ENCODE measurements at regions of chr6 and their contacts with region 1.

Region 1: GRCh38 chr6:26285143-26286134 is 79.6 kb upstream of the BTN3A2 start:
- DNase-seq: peak; percentile 72 to 97 (median 92)
- ATAC-seq: peak; percentile 91
- H3K4me3 ChIP-seq: peak overlapping the region; percentile 88
- H3K4me3 Mint-ChIP-seq: peak overlapping the region; percentile 86 to 96 (median 90)
- H3K27ac ChIP-seq: peak overlapping the region; percentile 91
- H3K27ac Mint-ChIP-seq: peak overlapping the region; percentile 91 to 100 (median 98)
- H3K4me1 ChIP-seq: peaks cover 0 to 8% of the 10 kb centered on the region in 2 donors
- H3K4me1 Mint-ChIP-seq: peaks cover 7 to 48% (median 33%) of the 10 kb centered on the region in 7 donors
- H3K27me3 ChIP-seq: no peaks in the 10 kb centered on the region
- H3K27me3 Mint-ChIP-seq: peaks cover 0 to 9% (median 5%) of the 10 kb centered on the region in 5 donors

Region 2: GRCh38 chr6:26031595-26032339 is 253.7 kb before region 1 on chr6:
- CTCF ChIA-PET with region 1: no interaction called
- POLR2A ChIA-PET with region 1: interaction called, 13 read pairs
- intact Hi-C with region 1: no loop called
- DNase-seq: peak; percentile 56 to 94 (median 90)
- ATAC-seq: peak; percentile 79
- H3K4me3 ChIP-seq: peak overlapping the region; percentile 70
- H3K4me3 Mint-ChIP-seq: peak overlapping the region; percentile 89 to 98 (median 96)
- H3K27ac ChIP-seq: peak overlapping the region; percentile 69
- H3K27ac Mint-ChIP-seq: peak overlapping the region; percentile 93 to 98 (median 96)
- H3K4me1 ChIP-seq: peaks cover 23 to 31% of the 10 kb centered on the region in 2 donors
- H3K4me1 Mint-ChIP-seq: peaks cover 14 to 69% (median 43%) of the 10 kb centered on the region in 7 donors
- H3K27me3 ChIP-seq: no peaks in the 10 kb centered on the region
- H3K27me3 Mint-ChIP-seq: peaks cover 0 to 7% (median 0%) of the 10 kb centered on the region in 5 donors

Region 3: DNA sequence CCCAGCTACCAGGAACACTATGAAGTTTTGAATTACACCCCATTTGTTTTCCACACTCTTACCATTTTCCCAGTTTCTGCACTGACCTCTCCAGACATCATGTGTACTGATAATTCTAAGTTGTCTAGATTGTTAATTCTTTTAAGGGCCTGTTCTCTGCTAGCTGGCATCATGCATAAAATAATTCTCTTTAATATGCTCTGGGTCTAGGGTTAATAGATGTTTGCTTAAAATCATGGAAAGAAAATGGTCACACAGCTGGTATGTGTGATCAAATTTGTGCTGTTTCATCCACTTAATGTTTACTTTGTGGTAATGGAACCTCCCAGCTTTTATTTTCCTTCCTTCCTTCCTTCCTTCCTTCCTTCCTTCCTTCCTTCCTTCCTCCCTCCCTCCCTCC is 149.1 kb before region 1 on chr6:
- CTCF ChIA-PET with region 1: no interaction called
- POLR2A ChIA-PET with region 1: no interaction called
- intact Hi-C with region 1: no loop called
- DNase-seq: no peak
- ATAC-seq: no peak
- H3K4me3 ChIP-seq: no peak overlapping the region
- H3K4me3 Mint-ChIP-seq: peak overlapping the region in 1 of 10 donors; percentile 45
- H3K27ac ChIP-seq: no peak overlapping the region
- H3K27ac Mint-ChIP-seq: peak overlapping the region in 5 of 9 donors; percentile 1 to 86 (median 53)
- H3K4me1 ChIP-seq: no peaks in the 10 kb centered on the region
- H3K4me1 Mint-ChIP-seq: peaks cover 11 to 65% (median 43%) of the 10 kb centered on the region in 7 donors
- H3K27me3 ChIP-seq: no peaks in the 10 kb centered on the region
- H3K27me3 Mint-ChIP-seq: no peaks in the 10 kb centered on the region

Region 4: GRCh38 chr6:26183581-26184366 is 101.7 kb before region 1 on chr6:
- CTCF ChIA-PET with region 1: interaction called, 4 read pairs
- POLR2A ChIA-PET with region 1: interaction called, 45 read pairs
- intact Hi-C with region 1: no loop called
- DNase-seq: peak; percentile 43 to 83 (median 77)
- ATAC-seq: peak; percentile 91
- H3K4me3 ChIP-seq: peak overlapping the region; percentile 82
- H3K4me3 Mint-ChIP-seq: peak overlapping the region; percentile 84 to 99 (median 98)
- H3K27ac ChIP-seq: peak overlapping the region; percentile 76
- H3K27ac Mint-ChIP-seq: peak overlapping the region; percentile 83 to 99 (median 90)
- H3K4me1 ChIP-seq: peaks cover 13 to 30% of the 10 kb centered on the region in 2 donors
- H3K4me1 Mint-ChIP-seq: peaks cover 19 to 59% (median 49%) of the 10 kb centered on the region in 7 donors
- H3K27me3 ChIP-seq: no peaks in the 10 kb centered on the region
- H3K27me3 Mint-ChIP-seq: no peaks in the 10 kb centered on the region

Region 5: DNA sequence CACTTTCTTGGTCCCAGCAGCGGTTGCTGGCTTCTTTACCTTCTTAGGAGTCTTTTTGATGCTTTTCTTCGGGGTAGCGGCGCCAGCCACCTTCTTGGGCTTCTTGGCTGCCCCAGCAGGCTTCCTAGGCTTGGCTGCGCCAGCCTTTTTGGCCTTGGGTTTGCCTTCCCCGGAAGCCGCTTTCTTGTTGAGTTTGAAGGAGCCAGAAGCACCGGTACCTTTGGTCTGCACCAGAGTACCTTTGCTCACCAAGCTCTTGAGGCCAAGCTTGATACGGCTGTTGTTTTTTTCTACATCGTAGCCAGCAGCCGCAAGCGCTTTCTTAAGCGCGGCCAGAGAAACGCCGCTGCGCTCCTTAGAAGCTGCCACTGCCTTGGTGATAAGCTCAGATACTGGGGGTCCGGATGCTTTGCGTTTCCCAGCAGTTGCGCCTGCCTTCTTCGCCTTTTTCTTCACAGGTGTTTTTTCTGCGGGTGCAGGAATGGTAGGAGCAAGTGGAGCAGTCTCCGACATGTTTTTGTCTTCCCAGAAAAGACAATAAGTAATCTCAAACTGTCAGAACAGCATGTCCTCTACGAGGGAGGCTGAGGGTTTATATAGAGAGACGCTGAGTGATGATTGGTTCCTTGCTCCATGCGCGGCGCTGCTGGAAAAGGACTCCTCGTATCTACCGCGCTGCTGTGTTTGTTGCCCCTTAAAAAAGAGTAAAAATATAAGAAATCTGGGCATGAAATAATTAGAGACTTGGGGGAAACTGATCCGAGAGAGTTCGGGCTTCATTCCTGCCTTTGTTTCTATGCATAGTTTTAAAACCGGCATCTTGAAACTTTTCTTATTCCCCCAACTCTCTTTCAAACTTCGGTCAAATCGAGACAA is 50.8 kb before region 1 on chr6:
- CTCF ChIA-PET with region 1: interaction called, 3 read pairs
- POLR2A ChIA-PET with region 1: interaction called, 139 read pairs
- intact Hi-C with region 1: loop called in 1 of 2 experiments (anchors 1 kb)
- DNase-seq: peak; percentile 48 to 94 (median 85)
- ATAC-seq: peak; percentile 80
- H3K4me3 ChIP-seq: peak overlapping the region; percentile 93
- H3K4me3 Mint-ChIP-seq: peak overlapping the region; percentile 87 to 99 (median 94)
- H3K27ac ChIP-seq: peak overlapping the region; percentile 87
- H3K27ac Mint-ChIP-seq: peak overlapping the region; percentile 93 to 100 (median 98)
- H3K4me1 ChIP-seq: peaks cover under 1 to 18% of the 10 kb centered on the region in 2 donors
- H3K4me1 Mint-ChIP-seq: peaks cover 18 to 52% (median 38%) of the 10 kb centered on the region in 7 donors
- H3K27me3 ChIP-seq: no peaks in the 10 kb centered on the region
- H3K27me3 Mint-ChIP-seq: peaks cover 0 to 15% (median 0%) of the 10 kb centered on the region in 5 donors

Region 6: DNA sequence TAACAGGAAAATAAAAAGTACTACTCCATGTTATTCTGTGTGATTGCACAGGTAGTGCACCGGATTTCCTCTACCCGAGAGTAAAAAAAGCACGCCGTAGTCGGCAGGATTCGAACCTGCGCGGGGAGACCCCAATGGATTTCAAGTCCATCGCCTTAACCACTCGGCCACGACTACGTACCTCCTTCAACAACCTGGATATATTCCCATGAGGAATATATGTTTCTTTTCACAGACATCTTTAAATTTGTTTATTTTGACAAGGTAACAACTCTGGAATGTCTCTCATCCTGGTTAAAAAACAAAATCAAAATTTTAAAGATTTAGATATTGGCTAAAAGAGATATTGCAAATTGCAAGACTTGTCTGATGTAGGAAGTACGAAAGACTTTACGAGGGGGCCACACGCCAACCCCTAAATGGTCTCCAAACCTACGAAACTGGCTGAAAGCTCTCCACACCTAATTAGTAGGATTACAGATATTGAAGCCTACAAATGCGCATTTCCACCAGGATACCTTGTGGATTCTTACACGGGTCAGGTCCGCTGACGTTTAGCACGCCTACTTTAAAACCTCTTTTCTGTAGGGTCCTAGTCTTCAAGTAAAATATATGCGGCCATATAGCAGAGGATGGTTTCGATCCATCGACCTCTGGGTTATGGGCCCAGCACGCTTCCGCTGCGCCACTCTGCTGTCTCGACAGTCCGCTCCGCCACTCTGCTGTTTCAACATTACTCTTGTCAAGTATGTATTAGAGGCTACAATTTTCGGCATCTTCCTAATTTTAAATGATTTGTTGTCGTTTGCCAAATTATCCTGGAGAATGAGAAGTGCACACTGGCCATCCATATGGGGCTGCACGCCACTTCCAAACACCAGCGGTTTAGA is 27.3 kb after region 1 on chr6:
- CTCF ChIA-PET with region 1: no interaction called
- POLR2A ChIA-PET with region 1: interaction called, 26 read pairs
- intact Hi-C with region 1: loop called (anchors 1 kb)
- DNase-seq: peak; percentile 64 to 91 (median 86)
- ATAC-seq: peak; percentile 75
- H3K4me3 ChIP-seq: peak overlapping the region; percentile 81
- H3K4me3 Mint-ChIP-seq: peak overlapping the region; percentile 83 to 100 (median 96)
- H3K27ac ChIP-seq: peak overlapping the region; percentile 55
- H3K27ac Mint-ChIP-seq: peak overlapping the region; percentile 82 to 100 (median 96)
- H3K4me1 ChIP-seq: peaks cover 4 to 19% of the 10 kb centered on the region in 2 donors
- H3K4me1 Mint-ChIP-seq: peaks cover 5 to 51% (median 37%) of the 10 kb centered on the region in 7 donors
- H3K27me3 ChIP-seq: no peaks in the 10 kb centered on the region
- H3K27me3 Mint-ChIP-seq: peaks cover 0 to 8% (median 0%) of the 10 kb centered on the region in 5 donors

Region 7: GRCh38 chr6:26537846-26538571 is 252.6 kb after region 1 on chr6 and contains the start of gene HMGN4:
- CTCF ChIA-PET with region 1: no interaction called
- POLR2A ChIA-PET with region 1: interaction called, 9 read pairs
- intact Hi-C with region 1: loop called in 1 of 2 experiments (anchors 1 kb)
- DNase-seq: peak; percentile 64 to 97 (median 95)
- ATAC-seq: peak; percentile 79
- H3K4me3 ChIP-seq: peak within 1 kb of the TSS; percentile 76
- H3K4me3 Mint-ChIP-seq: peak within 1 kb of the TSS; percentile 88 to 99 (median 94)
- H3K27ac ChIP-seq: peak within 1 kb of the TSS; percentile 88
- H3K27ac Mint-ChIP-seq: peak within 1 kb of the TSS; percentile 91 to 99 (median 98)
- H3K4me1 ChIP-seq: peaks cover 20 to 23% of the 10 kb centered on the region in 2 donors
- H3K4me1 Mint-ChIP-seq: peaks cover 46 to 72% (median 60%) of the 10 kb centered on the region in 7 donors
- H3K27me3 ChIP-seq: no peaks in the 10 kb centered on the region
- H3K27me3 Mint-ChIP-seq: peaks cover 0 to 5% (median 0%) of the 10 kb centered on the region in 5 donors
- total RNA-seq, gene HMGN4: 37.6 to 96.0 (median 81.7) TPM

Region 8: GRCh38 chr6:27871924-27872638 is 1586.6 kb after region 1 on chr6:
- CTCF ChIA-PET with region 1: no interaction called
- POLR2A ChIA-PET with region 1: interaction called, 3 read pairs
- intact Hi-C with region 1: loop called in 1 of 2 experiments (anchors 2 kb)
- DNase-seq: peak; percentile 68 to 97 (median 94)
- ATAC-seq: peak; percentile 88
- H3K4me3 ChIP-seq: peak overlapping the region; percentile 69
- H3K4me3 Mint-ChIP-seq: peak overlapping the region; percentile 83 to 99 (median 94)
- H3K27ac ChIP-seq: peak overlapping the region; percentile 84
- H3K27ac Mint-ChIP-seq: peak overlapping the region; percentile 95 to 98 (median 97)
- H3K4me1 ChIP-seq: peaks cover under 1 to 19% of the 10 kb centered on the region in 2 donors
- H3K4me1 Mint-ChIP-seq: peaks cover 15 to 69% (median 42%) of the 10 kb centered on the region in 7 donors
- H3K27me3 ChIP-seq: no peaks in the 10 kb centered on the region
- H3K27me3 Mint-ChIP-seq: peaks cover 0 to 8% (median 0%) of the 10 kb centered on the region in 5 donors

Measured in naive thymus-derived CD4-positive, alpha-beta T cell (primary cell).